Pancreas (tissue), 10 donors: ENCODE measurements at regions of chr9 and their contacts with region 1.

Region 1: DNA sequence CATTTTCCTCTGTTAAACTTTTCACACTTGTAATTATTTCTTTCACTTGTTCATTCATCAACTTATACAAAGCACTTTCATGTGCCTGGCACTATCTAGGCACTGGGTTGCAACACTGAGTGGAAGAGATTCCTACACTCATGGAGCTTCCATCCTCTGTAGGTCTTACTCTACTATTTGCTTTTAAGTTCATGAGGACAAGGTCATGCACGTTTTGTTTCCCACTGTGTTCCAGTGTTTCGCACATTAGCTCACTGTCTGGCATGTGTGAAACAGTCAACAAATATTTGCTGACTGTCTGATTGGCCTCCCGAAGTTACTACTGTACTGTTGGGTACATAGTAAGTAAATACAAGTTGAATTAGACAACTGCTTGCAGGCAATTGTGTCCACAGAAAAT is 87.9 kb upstream of the IFNK start:
- DNase-seq: peak in 3 of 6 donors; percentile 76 to 81 (median 76)
- ATAC-seq: peak; percentile 95 to 99 (median 97)
- H3K4me3 ChIP-seq: no peak overlapping the region
- H3K27ac ChIP-seq: peak overlapping the region in 2 of 4 donors; percentile 24 to 58
- H3K4me1 ChIP-seq: peaks cover 14 to 28% (median 27%) of the 10 kb centered on the region in 3 donors
- H3K27me3 ChIP-seq: no peaks in the 10 kb centered on the region
- CTCF ChIP-seq: no peak

Region 2: DNA sequence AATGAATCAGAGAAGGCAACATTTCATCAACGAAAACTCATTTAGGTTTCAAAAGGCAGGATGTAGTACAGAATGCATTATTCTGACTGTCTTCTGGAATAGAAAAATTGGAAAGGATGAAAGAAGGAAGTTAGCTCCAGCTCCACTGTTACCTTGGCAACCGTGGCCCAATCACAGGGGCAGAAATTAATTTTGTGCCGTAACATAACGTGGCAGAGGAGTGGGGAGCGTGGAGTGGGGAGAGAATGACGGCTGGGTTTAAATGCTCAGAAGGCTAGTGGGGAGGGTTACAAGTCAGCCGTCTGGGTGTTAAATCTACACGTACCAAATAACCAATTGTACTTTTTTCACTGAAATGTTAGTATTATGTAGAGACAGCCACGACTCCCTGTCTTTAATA is 106.9 kb before region 1 on chr9:
- intact Hi-C with region 1: no loop called
- DNase-seq: no peak
- ATAC-seq: no peak
- H3K4me3 ChIP-seq: no peak overlapping the region
- H3K27ac ChIP-seq: no peak overlapping the region
- H3K4me1 ChIP-seq: peaks cover 0 to 3% (median 0%) of the 10 kb centered on the region in 3 donors
- H3K27me3 ChIP-seq: no peaks in the 10 kb centered on the region
- CTCF ChIP-seq: no peak

Region 3: GRCh38 chr9:27377147-27377807 is 59.0 kb before region 1 on chr9:
- intact Hi-C with region 1: loop called in 1 of 3 experiments (anchors 10 kb)
- DNase-seq: no peak
- ATAC-seq: no peak
- H3K4me3 ChIP-seq: no peak overlapping the region
- H3K27ac ChIP-seq: no peak overlapping the region
- H3K4me1 ChIP-seq: peaks cover 24 to 47% (median 35%) of the 10 kb centered on the region in 3 donors
- H3K27me3 ChIP-seq: no peaks in the 10 kb centered on the region
- CTCF ChIP-seq: no peak

Region 4: DNA sequence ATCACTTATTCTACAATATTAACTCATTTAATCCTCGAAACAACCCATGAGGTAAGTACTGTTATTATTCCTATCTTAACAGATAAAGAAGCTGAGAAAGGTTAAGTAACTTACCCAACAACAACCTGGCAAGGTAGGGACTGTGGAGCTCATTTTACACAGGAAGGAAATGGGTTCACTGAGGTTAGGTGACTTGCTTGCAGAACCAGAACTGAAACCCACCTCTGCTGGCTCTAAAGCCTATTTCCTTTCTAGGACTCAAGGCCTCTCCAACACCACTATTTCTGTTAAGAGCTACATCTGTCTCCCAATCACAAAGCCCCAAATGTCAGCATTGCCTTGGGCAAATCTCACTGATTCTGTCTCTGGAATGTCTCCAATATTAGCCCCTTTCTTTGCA is 48.9 kb after region 1 on chr9:
- intact Hi-C with region 1: no loop called
- DNase-seq: no peak
- ATAC-seq: no peak
- H3K4me3 ChIP-seq: no peak overlapping the region
- H3K27ac ChIP-seq: no peak overlapping the region
- H3K4me1 ChIP-seq: peaks cover 0 to 3% (median 0%) of the 10 kb centered on the region in 3 donors
- H3K27me3 ChIP-seq: no peaks in the 10 kb centered on the region
- CTCF ChIP-seq: no peak

Region 5: GRCh38 chr9:27683181-27683580 is 246.9 kb after region 1 on chr9:
- intact Hi-C with region 1: no loop called
- DNase-seq: no peak
- ATAC-seq: no peak
- H3K4me3 ChIP-seq: no peak overlapping the region
- H3K27ac ChIP-seq: no peak overlapping the region
- H3K4me1 ChIP-seq: no peaks in the 10 kb centered on the region
- H3K27me3 ChIP-seq: no peaks in the 10 kb centered on the region
- CTCF ChIP-seq: no peak